Endothelial cell of umbilical vein (primary cell): ENCODE measurements at regions of chr19 and their contacts with region 1.

Region 1: GRCh38 chr19:50357178-50358100 is 8.0 kb downstream of the NAPSA start:
- DNase-seq: peak; percentile 72
- H3K4me3 ChIP-seq: peak overlapping the region; percentile 24 to 54 (median 31)
- H3K27ac ChIP-seq: peak overlapping the region; percentile 19
- H3K4me1 ChIP-seq: peaks cover 7% of the 10 kb centered on the region
- H3K27me3 ChIP-seq: peaks cover 0 to under 1% of the 10 kb centered on the region in 2 experiments
- CTCF ChIP-seq: peak; percentile 77 to 83
- POLR2A ChIP-seq: no peak

Region 2: DNA sequence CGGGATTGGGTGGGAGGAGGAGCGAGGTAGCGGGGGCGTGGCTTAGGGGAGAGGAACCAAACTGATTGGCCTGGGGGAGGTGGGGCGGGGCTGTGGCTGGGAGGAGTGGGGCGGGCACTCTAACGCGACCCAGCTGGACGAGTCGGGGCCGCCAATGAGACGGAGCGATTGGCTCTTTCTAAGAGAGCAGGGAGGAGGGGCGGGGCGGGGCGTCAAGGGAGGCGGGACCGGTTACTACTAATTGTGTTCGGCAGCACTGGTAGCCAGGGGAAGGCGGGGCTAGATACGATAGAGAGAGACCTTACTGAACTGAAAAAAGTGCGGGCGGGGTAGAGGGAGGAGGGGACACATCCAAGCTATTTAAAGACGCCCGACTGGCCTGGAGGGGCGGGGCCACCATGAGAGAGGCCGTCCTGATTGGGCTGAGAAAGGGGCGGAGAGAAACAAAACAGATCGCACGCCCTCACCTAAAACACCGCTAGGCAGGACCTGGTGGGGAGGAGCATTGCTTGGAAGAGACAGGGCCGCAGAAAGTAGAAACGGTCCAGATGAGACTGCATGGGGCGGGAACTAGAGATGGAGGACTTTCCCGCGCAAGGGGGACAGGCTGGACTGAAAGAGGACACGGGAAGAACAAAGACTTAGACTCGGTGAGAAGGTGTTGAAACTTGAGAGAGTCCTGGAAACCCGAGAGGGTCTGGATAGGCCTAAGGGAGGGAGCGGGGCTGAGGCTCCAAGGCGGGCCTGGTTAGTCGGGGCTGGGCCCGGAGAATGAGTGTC is 28.1 kb before region 1 on chr19 and contains the start of gene KCNC3:
- CTCF ChIA-PET with region 1: interaction called, 11 read pairs
- POLR2A ChIA-PET with region 1: no interaction called
- dilution Hi-C with region 1: no loop called
- intact Hi-C with region 1: loop called (anchors 2 kb)
- DNase-seq: peak; percentile 99
- H3K4me3 ChIP-seq: peak within 1 kb of the TSS; percentile 28 to 42 (median 31)
- H3K27ac ChIP-seq: no peak within 1 kb of the TSS
- H3K4me1 ChIP-seq: peaks cover 9% of the 10 kb centered on the region
- H3K27me3 ChIP-seq: peaks cover 32 to 35% of the 10 kb centered on the region in 2 experiments
- CTCF ChIP-seq: no peak
- POLR2A ChIP-seq: no peak
- total RNA-seq, gene KCNC3: 0.76 and 0.91 TPM in 2 replicates

Region 3: DNA sequence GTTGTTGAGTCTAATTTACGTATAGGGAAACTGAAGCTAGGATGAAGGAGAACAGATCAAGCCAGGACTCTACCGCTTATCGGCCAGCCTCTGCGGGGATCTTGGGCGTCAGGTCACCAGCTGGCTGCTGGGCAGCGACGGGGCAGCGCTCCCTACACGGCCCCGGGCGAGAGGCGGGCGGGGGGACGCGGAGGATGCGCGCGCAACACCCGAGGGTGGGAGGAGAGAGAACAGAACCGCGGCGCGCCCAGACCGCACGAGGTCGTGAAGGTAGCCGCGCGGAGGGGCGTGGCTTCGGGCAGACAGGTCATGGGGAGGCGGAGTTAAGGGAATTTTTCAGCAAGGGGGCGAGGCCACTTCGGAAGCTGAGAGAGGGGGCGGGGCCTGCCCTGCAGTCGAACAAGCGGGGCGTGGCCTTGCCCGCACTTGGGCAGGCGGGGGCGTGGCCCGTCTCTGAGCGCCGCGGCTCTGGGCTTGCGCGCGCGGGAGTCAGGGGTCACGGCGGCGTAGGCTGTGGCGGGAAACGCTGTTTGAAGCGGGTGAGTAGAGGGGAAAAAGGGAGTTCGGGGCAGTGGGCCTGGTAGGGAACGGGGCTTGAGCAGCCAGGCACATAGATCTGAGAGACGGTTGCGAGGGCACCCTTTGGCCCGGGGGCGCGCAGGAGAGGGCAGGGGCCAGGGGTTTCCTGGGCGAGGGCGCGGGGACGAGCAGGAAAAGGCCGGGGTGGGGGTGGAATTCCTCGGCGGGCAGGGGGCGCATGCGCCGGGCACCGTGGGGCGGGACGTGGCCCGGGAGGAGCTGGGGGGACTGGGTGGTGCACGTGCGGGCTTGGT is 26.6 kb after region 1 on chr19 and contains the start of gene POLD1:
- CTCF ChIA-PET with region 1: interaction called, 4 read pairs
- POLR2A ChIA-PET with region 1: no interaction called
- dilution Hi-C with region 1: no loop called
- intact Hi-C with region 1: loop called (anchors 1 kb)
- DNase-seq: peak; percentile 99
- H3K4me3 ChIP-seq: peak within 1 kb of the TSS; percentile 71 to 94 (median 80)
- H3K27ac ChIP-seq: peak within 1 kb of the TSS; percentile 63
- H3K4me1 ChIP-seq: peaks cover 16% of the 10 kb centered on the region
- H3K27me3 ChIP-seq: no peaks in the 10 kb centered on the region
- CTCF ChIP-seq: no peak
- POLR2A ChIP-seq: peak; percentile 79
- total RNA-seq, gene POLD1: 63.9 and 73.8 TPM in 2 replicates

Region 4: DNA sequence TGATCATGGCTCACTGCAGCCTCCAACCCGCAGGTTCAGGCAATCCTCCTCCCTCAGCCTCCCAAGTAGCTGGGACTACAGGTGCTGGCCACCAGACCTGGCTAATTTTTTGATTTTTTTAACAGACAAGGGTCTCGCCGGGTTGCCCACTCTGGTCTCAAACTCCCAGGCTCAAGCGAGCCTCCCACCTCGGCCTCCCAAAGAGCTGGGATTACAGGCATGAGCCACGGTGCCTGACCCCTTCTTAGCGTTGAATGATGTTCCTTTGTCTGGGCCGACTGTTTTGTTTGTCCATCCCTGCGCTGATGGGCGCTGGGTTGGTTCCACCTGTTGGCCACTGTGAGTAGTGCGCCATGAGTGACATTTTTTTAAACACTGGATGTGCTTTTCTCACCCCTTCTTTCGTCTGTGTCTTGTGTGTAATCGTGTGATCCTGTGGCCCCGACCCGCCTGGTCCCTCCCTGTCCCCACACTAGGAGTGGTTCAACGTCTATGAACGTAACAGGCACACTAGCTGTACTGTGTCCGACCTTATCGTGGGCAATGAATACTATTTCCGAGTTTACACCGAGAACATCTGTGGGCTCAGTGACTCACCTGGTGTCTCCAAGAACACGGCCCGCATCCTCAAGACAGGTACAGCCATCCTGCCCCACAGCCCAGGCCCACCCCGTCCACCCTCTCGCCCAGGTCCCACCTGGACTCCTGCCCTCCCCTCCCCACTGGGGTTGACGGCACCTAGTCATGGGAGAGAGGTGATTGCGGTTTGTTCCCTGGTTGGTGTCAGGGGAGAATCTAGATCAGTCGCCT is 103.8 kb after region 1 on chr19:
- CTCF ChIA-PET with region 1: interaction called, 68 read pairs
- POLR2A ChIA-PET with region 1: no interaction called
- dilution Hi-C with region 1: no loop called
- intact Hi-C with region 1: loop called (anchors 1 kb)
- DNase-seq: peak; percentile 68
- H3K4me3 ChIP-seq: no peak overlapping the region
- H3K27ac ChIP-seq: no peak overlapping the region
- H3K4me1 ChIP-seq: no peaks in the 10 kb centered on the region
- H3K27me3 ChIP-seq: no peaks in the 10 kb centered on the region
- CTCF ChIP-seq: peak; percentile 81 to 82
- POLR2A ChIP-seq: no peak

Region 5: DNA sequence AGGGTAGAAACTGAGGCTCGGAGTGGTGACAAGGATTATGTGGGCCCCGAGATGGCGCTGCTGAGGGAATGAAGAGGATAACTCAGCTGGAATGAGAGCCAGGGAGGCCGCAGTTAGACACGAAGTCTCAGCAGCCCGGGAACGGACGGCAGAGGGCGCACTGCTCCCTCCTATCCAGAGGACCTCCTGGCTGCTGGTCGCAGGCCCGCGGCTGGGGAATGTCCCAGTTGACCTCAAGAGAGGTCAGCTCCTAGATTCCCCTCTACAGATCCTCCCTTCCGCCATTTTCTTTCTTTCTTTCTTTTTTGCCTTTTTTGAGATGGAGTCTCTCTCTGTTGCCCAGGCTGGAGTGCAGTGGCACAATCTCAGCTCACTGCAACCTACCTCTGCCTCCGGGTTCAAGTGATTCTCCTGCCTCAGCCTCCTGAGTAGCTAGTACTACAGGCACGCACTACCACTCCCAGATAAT is 180.4 kb after region 1 on chr19:
- CTCF ChIA-PET with region 1: interaction called, 15 read pairs
- POLR2A ChIA-PET with region 1: no interaction called
- dilution Hi-C with region 1: no loop called
- intact Hi-C with region 1: no loop called
- DNase-seq: peak; percentile 83
- H3K4me3 ChIP-seq: no peak overlapping the region
- H3K27ac ChIP-seq: no peak overlapping the region
- H3K4me1 ChIP-seq: no peaks in the 10 kb centered on the region
- H3K27me3 ChIP-seq: peaks cover 0 to 2% of the 10 kb centered on the region in 2 experiments
- CTCF ChIP-seq: peak; percentile 93 to 97
- POLR2A ChIP-seq: no peak

Region 6: DNA sequence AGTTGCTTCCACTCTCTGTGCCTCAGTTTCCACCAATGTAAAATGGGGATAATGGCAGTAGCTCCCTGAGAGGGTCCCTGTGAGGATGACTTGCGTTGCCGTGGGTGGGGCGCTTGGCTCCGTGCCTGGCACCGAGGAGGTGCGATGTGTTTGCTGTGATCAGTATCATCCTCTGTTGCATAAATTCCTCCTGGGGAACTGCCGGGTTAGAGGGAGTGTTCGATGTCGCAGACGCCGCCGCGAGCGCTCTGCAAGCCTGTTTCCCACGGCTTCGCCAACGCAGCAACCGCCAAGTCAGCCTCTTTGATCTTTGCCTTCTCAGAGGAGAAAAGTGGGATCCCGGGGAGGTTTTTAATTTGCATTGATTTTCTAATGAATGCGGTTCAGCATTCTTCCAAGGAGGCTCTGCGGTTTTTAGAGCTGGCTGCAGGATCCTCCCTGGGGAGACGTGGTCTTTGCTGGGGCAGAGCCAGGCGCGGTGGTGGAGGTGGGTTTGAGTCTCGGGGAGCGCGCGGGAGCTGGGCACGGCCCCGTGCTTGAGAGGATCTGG is 420.4 kb after region 1 on chr19:
- CTCF ChIA-PET with region 1: interaction called, 3 read pairs
- POLR2A ChIA-PET with region 1: no interaction called
- dilution Hi-C with region 1: no loop called
- intact Hi-C with region 1: loop called (anchors 1 kb)
- DNase-seq: no peak
- H3K4me3 ChIP-seq: no peak overlapping the region
- H3K27ac ChIP-seq: no peak overlapping the region
- H3K4me1 ChIP-seq: no peaks in the 10 kb centered on the region
- H3K27me3 ChIP-seq: peaks cover 26 to 29% of the 10 kb centered on the region in 2 experiments
- CTCF ChIP-seq: no peak
- POLR2A ChIP-seq: no peak